ENCODE measurements at regions of chr6 and their contacts with region 1.

Region 1: GRCh38 chr6:1575210-1576041 is 34.3 kb upstream of the FOXC1 start:
- DNase-seq: no peak

Region 2: DNA sequence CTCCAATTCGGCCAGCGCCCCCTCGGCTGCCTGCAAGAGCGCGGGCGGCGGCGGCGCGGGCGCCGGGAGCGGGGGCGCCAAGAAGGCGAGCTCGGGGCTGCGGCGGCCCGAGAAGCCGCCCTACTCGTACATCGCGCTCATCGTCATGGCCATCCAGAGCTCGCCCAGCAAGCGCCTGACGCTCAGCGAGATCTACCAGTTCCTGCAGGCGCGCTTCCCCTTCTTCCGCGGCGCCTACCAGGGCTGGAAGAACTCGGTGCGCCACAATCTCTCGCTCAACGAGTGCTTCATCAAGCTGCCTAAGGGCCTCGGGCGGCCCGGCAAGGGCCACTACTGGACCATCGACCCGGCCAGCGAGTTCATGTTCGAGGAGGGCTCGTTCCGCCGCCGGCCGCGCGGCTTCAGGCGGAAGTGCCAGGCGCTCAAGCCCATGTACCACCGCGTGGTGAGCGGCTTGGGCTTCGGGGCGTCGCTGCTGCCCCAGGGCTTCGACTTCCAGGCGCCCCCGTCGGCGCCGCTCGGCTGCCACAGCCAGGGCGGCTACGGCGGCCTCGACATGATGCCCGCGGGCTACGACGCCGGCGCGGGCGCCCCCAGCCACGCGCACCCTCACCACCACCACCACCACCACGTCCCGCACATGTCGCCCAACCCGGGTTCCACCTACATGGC is 185.2 kb before region 1 on chr6:
- intact Hi-C with region 1: loop called in 1 of 2 experiments (anchors 2 kb)
- DNase-seq: no peak

Region 3: GRCh38 chr6:3522561-3523250 is 1947.3 kb after region 1 on chr6:
- intact Hi-C with region 1: loop called in 1 of 2 experiments (anchors 5 kb)
- DNase-seq: no peak

Measured in posterior vena cava (tissue), 2 donors.